ENCODE measurements at regions of chr5 and their contacts with region 1.

Region 1: DNA sequence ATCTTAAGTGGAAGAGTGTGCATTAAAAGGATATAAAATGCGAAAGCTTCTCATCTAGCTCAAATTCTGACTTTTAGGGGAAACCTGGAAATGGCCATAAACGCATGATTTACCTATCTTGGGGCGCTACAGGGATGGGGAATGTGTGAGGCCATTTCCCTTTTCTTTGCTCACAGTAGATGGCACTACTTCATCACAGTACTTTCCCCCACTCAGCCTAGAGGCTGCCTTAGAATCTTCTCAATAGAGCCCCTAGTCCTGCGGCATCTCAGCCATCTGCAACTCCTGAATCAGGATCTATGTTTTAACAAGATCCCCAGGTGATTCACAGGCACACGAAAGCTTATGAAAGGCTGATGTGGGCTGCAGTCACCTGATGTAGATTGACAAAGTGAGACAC is 110.8 kb downstream of the LHFPL2 start:
- DNase-seq: no peak
- ATAC-seq: peak; percentile 59
- H3K4me3 ChIP-seq: no peak overlapping the region
- H3K4me1 ChIP-seq: no peaks in the 10 kb centered on the region
- CTCF ChIP-seq: peak; percentile 9

Region 2: DNA sequence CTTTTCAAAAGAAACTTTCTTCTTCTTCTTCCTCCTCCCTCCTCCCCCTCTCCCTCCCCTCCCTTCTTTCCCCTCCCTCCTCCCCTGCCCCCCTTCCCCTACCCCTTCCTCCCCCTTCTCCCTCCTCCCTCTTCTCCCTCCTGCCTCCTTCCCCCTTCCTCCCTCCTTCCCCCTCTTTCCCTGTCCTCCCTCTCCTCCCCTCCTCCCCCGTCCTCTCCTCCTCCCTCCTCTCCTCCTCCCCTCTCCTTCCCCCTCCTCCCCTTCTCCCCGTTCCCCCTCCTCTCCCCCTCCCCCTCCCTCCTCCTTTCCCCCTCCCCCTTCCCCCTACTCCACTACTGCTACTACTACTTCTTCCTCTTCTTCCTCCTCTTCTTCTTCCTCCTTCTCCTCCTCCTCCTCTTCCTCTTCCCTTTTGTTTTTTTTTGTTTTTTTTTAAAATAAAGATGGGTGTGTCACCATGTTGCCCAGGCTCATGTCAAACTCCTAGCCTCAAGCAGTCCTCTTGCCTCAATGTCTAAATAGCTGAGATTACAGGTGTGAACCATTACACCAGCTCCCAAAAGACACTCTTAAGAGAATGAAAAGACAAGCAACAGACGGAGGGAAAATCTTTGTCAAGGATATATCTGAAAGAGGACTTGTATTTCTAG is 89.9 kb before region 1 on chr5:
- intact Hi-C with region 1: no loop called
- DNase-seq: no peak
- ATAC-seq: no peak
- H3K4me3 ChIP-seq: no peak overlapping the region
- H3K4me1 ChIP-seq: no peaks in the 10 kb centered on the region
- CTCF ChIP-seq: no peak

Region 3: DNA sequence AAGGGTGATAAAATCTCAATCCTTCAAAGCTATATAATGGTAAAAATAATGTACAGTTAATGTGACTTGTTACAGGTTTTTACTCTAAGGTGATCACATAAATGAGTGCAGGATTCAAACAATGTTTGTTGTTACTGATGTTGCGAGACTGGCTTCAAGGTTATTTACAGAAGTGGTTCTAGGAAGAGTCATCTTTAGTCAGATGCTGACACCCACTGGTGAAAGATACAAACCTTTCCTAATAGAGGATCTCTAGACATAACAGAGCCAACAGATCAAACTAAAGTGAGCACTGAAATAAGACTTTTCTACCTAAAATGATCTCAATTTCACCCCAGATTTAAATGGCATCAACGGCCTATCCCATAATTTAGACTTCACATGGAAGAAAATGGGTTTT is 427.1 kb after region 1 on chr5:
- intact Hi-C with region 1: loop called in 1 of 2 experiments (anchors 10 kb)
- DNase-seq: peak in 1 of 3 donors; percentile 55
- ATAC-seq: peak; percentile 57
- H3K4me3 ChIP-seq: no peak overlapping the region
- H3K4me1 ChIP-seq: no peaks in the 10 kb centered on the region
- CTCF ChIP-seq: peak; percentile 5

Measured in mucosa of descending colon (tissue), 3 donors.